H1 (cell line): ENCODE measurements at regions of chr16 and their contacts with region 1.

Region 1: DNA sequence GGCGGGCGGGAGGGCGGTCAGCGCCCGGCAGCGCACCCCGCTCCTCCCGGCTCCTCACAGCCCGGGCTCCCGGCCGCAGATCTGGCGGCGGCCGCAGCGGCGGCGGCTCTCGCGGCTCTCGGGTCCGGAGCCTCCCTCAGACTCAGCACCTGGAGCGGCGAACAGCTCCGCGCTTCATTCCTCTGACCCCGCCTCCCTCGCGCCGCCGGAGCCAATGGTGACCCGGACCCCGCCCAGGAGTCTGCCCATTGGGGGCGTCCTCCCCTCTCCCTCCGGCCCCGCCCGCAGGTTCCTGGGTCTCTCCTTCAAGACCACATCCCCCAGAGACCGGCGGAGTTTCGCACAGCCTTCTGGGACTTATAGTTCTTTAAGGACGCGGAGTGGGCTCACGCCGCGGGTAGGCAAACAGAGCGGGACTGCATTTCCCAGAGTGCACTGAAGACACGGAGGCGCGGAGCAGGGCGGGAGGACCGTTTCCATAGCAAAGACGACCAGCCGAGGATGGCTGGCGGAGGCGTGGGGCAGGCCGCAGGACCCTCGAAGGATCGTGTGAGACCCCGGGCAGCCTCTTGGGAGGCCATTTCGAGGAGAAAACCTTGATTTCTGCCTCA is at the start of gene SMPD3:
- DNase-seq: peak; percentile 99
- H3K4me3 ChIP-seq: peak within 1 kb of the TSS; percentile 53 to 70 (median 62); a peak in 7 of 8 replicates
- H3K27ac ChIP-seq: no peak within 1 kb of the TSS
- H3K4me1 ChIP-seq: peaks cover 0 to 12% (median 10%) of the 10 kb centered on the region in 4 experiments; a peak in 5 of 7 replicates
- H3K27me3 ChIP-seq: peaks cover 16 to 26% (median 23%) of the 10 kb centered on the region in 4 experiments
- CTCF ChIP-seq: no peak
- EP300 ChIP-seq: 0 out of 3 replicates have a peak, but pooled peaks of 1 of the 2 experiments have one; percentile 19
- POLR2A ChIP-seq: no peak
- RAD21 ChIP-seq: no peak
- total RNA-seq, gene SMPD3: 1.1 and 1.3 TPM in 2 replicates

Region 2: DNA sequence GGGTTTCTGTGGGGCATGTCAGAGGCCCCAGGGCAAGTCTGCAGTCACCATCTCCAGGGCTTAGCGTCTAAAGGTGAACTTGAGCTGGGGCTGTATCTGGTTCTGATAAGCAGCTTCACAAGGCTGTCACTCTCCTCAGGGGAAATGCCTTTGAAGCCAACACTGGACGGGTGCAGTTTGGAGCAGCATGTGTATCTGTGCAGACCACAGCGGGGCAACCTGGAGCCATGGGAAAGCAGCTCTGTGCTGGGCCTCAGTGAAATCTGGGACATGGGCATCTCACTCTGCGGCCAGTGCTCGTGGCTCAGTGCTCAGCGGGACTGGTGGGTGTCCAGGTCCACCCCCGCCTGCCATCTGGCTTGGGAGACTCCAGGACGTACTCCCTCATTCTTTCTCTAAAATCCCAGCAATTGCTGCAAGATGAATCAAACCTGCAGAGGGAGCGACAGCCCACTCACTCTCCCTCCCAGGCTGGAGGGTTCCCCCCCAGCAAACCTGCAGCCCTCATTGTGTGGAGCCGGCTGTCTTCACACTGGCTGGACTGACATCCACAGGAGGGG is 74.1 kb before region 1 on chr16:
- CTCF ChIA-PET with region 1: interaction called, 153 read pairs
- POLR2A ChIA-PET with region 1: no interaction called
- DNase-seq: no peak
- H3K4me3 ChIP-seq: no peak overlapping the region
- H3K27ac ChIP-seq: no peak overlapping the region
- H3K4me1 ChIP-seq: peaks cover 0 to 2% (median under 1%) of the 10 kb centered on the region in 4 experiments; a peak in 3 of 7 replicates
- H3K27me3 ChIP-seq: peaks cover 0 to 2% (median 0%) of the 10 kb centered on the region in 4 experiments; a peak in 2 of 7 replicates
- CTCF ChIP-seq: no peak
- EP300 ChIP-seq: no peak
- POLR2A ChIP-seq: no peak
- RAD21 ChIP-seq: no peak

Region 3: DNA sequence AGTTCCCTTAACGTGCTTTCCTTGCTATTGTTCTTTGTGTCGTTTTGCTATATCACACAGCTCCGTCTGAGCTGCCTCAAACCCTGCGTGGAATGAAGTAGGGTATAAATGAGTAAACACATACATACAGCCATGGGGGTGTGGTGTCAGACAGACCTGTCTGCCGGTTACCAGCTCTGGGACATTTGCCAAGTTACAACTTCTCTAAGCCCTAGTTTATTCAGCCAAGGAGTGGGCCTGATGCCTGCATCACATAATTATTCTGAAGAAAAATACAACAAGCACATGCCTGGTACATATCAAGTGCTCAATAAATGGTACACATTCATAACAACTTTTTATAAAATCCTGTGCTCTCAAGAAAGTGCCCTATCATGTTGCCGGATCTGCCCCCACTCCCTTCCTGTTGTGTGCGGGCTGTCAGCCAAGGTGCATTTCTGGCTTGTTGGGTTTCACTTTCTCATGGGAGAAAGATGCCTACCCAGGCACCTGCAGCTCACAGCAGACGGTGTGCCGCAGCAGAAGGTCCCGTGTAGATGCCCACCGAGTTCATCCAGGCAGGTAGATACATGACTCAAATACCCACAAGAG is 30.7 kb before region 1 on chr16:
- CTCF ChIA-PET with region 1: interaction called, 14 read pairs
- POLR2A ChIA-PET with region 1: no interaction called
- DNase-seq: no peak
- H3K4me3 ChIP-seq: no peak overlapping the region
- H3K27ac ChIP-seq: no peak overlapping the region
- H3K4me1 ChIP-seq: peaks cover 0 to 5% (median 1%) of the 10 kb centered on the region in 4 experiments; a peak in 2 of 7 replicates
- H3K27me3 ChIP-seq: no peaks in the 10 kb centered on the region; a peak in 1 of 7 replicates
- CTCF ChIP-seq: no peak
- EP300 ChIP-seq: no peak
- POLR2A ChIP-seq: no peak
- RAD21 ChIP-seq: no peak

Region 4: GRCh38 chr16:68436581-68436980 is 11.9 kb before region 1 on chr16:
- CTCF ChIA-PET with region 1: interaction called, 43 read pairs
- POLR2A ChIA-PET with region 1: no interaction called
- DNase-seq: peak in 1 of 2 experiments; percentile 65
- H3K4me3 ChIP-seq: no peak overlapping the region
- H3K27ac ChIP-seq: no peak overlapping the region
- H3K4me1 ChIP-seq: peaks cover 0 to 3% (median 0%) of the 10 kb centered on the region in 4 experiments; a peak in 1 of 7 replicates
- H3K27me3 ChIP-seq: no peaks in the 10 kb centered on the region; a peak in 1 of 7 replicates
- CTCF ChIP-seq: peak; percentile 51 to 65 (median 58)
- EP300 ChIP-seq: no peak
- POLR2A ChIP-seq: no peak
- RAD21 ChIP-seq: peak; percentile 34 to 51

Region 5: GRCh38 chr16:68506331-68507053 is 58.0 kb after region 1 on chr16:
- CTCF ChIA-PET with region 1: interaction called, 130 read pairs
- POLR2A ChIA-PET with region 1: no interaction called
- DNase-seq: no peak
- H3K4me3 ChIP-seq: no peak overlapping the region
- H3K27ac ChIP-seq: no peak overlapping the region
- H3K4me1 ChIP-seq: no peaks in the 10 kb centered on the region
- H3K27me3 ChIP-seq: peaks cover 0 to 3% (median 1%) of the 10 kb centered on the region in 4 experiments; a peak in 2 of 7 replicates
- CTCF ChIP-seq: no peak
- EP300 ChIP-seq: no peak
- POLR2A ChIP-seq: no peak
- RAD21 ChIP-seq: no peak

Region 6: DNA sequence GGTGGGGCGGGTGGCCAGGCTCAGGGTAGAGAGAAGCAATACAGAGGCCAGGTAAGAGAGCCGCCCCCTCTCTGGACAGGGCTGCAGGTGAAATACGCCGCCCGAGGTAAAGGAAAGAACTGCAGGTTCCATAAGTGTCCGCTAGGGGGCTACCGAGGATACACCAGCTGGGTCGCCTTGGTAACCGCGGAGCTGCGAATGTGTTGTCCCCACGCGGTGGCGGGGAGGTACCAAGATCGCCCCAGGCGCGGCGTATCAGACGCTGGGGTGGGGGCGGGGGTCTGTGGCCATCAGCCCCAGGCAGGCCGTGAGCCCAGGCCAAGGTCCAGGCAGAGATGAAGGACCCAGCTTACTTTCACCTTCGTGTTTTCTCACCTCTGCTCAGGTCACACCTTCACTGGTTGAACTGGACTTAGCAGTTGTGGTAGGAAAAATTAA is 72.2 kb after region 1 on chr16:
- CTCF ChIA-PET with region 1: interaction called, 15 read pairs
- POLR2A ChIA-PET with region 1: no interaction called
- DNase-seq: peak; percentile 58 to 96
- H3K4me3 ChIP-seq: peak overlapping the region in 3 of 4 experiments; percentile 2 to 43 (median 14); a peak in 4 of 8 replicates
- H3K27ac ChIP-seq: no peak overlapping the region
- H3K4me1 ChIP-seq: no peaks in the 10 kb centered on the region; a peak in 1 of 7 replicates
- H3K27me3 ChIP-seq: peaks cover 0 to 7% (median 3%) of the 10 kb centered on the region in 4 experiments; a peak in 4 of 7 replicates
- CTCF ChIP-seq: peak; percentile 99 to 100 (median 100)
- EP300 ChIP-seq: 0 out of 3 replicates have a peak, but pooled peaks of 1 of the 2 experiments have one; percentile 33
- POLR2A ChIP-seq: no peak
- RAD21 ChIP-seq: peak; percentile 61 to 73